ENCODE measurements at regions of chr18 and their contacts with region 1.

Region 1: GRCh38 chr18:35756506-35757117 is 175.1 kb downstream of the GALNT1 start:
- DNase-seq: peak; percentile 42 to 84
- H3K4me3 ChIP-seq: no peak overlapping the region
- CTCF ChIP-seq: no peak
- POLR2A ChIP-seq: no peak

Region 2: DNA sequence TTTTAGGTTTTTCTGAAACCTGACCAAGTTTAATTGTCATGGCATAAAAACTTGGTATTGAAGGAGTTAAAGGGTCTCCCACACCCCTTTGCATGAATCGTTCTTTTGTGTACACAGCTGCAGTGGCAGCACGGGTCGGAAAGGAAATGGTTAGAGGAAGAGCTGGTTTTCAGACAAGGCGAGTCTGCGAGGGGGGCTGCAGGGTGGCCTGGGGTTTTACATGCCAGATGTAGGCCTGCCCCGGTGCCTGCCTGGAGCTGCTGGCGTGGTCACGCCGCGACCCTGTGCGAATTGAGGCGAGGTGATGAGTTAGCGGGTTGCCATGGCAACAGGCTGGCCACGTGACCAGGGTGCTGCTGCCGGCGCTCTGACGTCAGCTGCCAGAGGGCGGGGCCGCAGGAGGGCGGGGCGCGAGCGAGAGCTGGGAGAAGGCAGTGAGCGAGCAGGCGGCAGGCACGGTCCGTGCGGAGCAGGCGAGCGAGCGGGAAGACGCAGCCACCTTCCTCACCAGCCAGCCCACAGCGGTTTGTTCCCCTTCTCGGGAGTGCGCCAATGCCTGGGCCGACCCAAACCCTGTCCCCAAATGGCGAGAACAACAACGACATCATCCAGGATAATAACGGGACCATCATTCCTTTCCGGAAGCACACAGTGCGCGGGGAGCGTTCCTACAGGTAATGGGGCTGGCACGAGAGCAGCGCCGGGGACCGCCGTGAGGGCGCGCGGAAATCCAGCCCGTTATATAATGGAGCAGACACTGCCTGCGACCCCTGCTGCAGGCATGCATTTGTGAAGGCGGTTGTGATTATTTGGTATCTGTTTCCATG is 715.4 kb before region 1 on chr18 and contains the start of gene MAPRE2:
- intact Hi-C with region 1: no loop called
- DNase-seq: peak; percentile 96 to 100
- H3K4me3 ChIP-seq: peak within 1 kb of the TSS; percentile 50
- CTCF ChIP-seq: no peak
- POLR2A ChIP-seq: peak in 1 of 2 donors; percentile 22
- total RNA-seq, gene MAPRE2: 21.8 to 57.7 (median 40.0) TPM

Region 3: DNA sequence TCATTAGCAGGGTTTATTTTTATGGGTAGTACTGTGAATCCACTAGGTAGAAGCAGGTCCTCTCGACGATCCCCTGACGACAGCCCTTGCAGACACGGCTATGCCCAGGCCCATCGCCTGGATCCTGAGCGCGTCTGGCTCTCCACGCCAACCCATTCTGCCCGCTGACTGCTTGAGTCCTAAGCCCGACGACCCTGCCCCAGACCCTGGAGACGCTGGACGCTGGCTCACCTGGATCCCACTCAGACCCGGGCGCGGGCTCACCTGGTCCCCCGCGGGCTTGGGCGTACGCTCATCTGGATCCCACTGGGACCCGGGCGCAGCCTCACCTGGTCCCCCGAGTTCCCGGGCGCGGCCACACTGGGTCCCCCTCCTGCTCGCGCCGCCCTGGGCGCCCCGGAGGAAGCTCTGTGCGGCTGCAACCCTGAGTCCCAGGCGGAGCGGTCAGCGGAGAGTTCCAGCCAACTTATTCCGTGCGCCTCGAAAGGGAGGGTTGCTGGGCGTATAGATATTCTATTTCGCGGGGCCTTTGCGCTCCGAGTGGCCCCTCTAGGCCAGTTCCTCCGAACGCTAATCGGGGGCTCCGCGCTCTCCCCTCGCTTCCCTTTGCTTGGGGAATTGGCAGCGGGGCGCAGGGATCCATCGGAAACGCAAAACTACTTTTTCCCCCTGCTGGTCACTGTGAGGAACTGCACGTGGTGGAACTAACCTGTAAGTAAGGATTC is 193.5 kb after region 1 on chr18:
- intact Hi-C with region 1: loop called (anchors 10 kb)
- DNase-seq: peak in 1 of 2 donors; percentile 50
- H3K4me3 ChIP-seq: peak overlapping the region; percentile 2
- CTCF ChIP-seq: peak in 1 of 3 donors; percentile 84
- POLR2A ChIP-seq: no peak